Gastrocnemius medialis (tissue), 4 donors: ENCODE measurements at regions of chr7 and their contacts with region 1.

Region 1: DNA sequence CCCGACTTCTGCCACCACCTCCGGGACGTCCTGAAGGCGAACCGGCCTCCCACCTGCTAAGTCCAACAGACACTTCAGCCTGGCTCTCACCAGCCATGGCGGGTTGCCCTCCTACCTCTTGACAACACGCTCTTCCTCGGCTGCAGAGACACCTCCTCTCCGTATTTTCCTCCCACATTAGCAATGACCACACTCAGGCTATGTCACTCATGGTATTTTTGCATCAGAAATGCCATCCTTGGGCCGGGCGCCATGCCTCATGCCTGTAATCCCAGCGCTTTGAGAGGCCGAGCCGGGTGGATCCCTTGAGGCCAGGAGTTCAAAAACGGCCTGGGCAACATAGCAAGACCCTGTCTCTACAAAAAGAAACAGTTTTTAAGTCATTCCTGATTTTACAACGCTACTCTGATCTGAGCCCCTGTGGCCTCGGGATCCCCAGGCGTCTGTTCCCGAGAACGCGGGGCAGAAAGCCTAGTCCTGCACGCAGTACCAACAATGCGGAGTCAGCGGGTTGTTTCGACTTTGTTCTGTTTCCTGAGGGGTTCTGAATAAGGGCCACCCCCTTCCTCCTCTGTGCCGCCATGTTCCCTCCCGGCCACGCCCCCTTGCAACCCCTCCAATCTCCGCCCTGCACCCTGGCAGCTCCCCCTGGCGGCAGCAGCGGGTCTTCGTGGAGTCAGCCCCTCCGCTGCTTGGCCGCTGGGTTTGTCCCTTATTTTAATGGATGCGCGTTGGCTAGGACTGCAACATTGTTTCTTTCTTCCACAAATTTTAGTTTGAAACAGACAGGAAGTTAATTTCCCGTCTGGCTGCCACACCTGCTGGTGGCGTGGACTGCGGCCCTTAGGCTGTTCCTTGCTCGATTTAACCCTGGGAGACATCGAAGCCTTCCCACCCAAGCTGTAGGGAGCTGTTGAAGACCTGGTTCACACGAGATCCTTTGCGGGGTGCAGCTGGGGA is 9.7 kb upstream of the ZFAND2A start:
- DNase-seq: peak; percentile 63 to 74
- ATAC-seq: peak; percentile 75 to 86
- H3K4me3 ChIP-seq: peak overlapping the region; percentile 55 to 72 (median 60)
- H3K27ac ChIP-seq: peak overlapping the region in 3 of 4 donors; percentile 56 to 65 (median 64)
- H3K4me1 ChIP-seq: peaks cover 11 to 14% of the 10 kb centered on the region in 2 donors
- H3K27me3 ChIP-seq: no peaks in the 10 kb centered on the region
- CTCF ChIP-seq: peak; percentile 43 to 89 (median 80)
- POLR2A ChIP-seq: no peak

Region 2: GRCh38 chr7:1123715-1124114 is 46.0 kb before region 1 on chr7:
- in situ Hi-C with region 1: no loop called
- intact Hi-C with region 1: loop called (anchors 5 kb)
- DNase-seq: peak; percentile 59 to 85
- ATAC-seq: peak; percentile 71 to 91
- H3K4me3 ChIP-seq: peak overlapping the region; percentile 41 to 61 (median 44)
- H3K27ac ChIP-seq: peak overlapping the region; percentile 77 to 86 (median 80)
- H3K4me1 ChIP-seq: peaks cover 12% of the 10 kb centered on the region in 2 donors
- H3K27me3 ChIP-seq: no peaks in the 10 kb centered on the region
- CTCF ChIP-seq: peak; percentile 46 to 66 (median 57)
- POLR2A ChIP-seq: no peak